Psoas muscle (tissue), 8 donors: ENCODE measurements at regions of chr1 and their contacts with region 1.

Region 1: DNA sequence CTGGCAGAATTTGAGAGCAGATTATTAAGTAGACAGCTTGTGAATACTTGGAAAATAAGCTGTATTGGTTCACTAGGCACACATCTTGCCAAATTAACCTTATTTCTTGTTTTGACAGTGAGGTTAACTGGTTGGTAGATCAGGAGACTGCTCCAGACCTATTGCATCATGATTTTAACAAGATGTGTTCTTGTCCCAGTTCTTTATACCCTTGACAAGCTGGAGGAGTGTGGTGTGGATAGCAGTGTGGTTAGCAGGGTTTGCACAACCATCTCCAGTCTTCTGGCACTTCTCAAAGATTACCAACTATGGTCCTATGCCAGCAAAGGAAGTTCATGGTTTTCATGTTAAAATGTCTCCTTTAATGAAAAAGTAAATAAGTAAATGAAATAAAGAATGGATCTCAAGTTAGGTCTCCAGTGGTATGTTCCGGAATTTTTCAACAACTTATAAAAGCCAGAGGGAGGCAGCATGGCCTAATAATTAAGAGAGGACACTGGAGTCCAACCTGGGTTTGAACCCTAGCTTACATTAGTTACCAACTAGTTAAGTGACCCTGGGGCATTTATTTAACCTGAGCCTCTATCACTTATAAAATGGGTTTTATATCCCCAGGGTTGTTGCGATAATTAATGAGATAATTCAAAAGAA is 34.1 kb downstream of the DDX20 start:
- DNase-seq: no peak
- ATAC-seq: peak in 2 of 4 donors; percentile 55 to 77
- H3K4me3 ChIP-seq: no peak overlapping the region
- H3K27ac ChIP-seq: no peak overlapping the region
- H3K4me1 ChIP-seq: no peaks in the 10 kb centered on the region
- H3K27me3 ChIP-seq: no peaks in the 10 kb centered on the region
- CTCF ChIP-seq: peak; percentile 25

Region 2: DNA sequence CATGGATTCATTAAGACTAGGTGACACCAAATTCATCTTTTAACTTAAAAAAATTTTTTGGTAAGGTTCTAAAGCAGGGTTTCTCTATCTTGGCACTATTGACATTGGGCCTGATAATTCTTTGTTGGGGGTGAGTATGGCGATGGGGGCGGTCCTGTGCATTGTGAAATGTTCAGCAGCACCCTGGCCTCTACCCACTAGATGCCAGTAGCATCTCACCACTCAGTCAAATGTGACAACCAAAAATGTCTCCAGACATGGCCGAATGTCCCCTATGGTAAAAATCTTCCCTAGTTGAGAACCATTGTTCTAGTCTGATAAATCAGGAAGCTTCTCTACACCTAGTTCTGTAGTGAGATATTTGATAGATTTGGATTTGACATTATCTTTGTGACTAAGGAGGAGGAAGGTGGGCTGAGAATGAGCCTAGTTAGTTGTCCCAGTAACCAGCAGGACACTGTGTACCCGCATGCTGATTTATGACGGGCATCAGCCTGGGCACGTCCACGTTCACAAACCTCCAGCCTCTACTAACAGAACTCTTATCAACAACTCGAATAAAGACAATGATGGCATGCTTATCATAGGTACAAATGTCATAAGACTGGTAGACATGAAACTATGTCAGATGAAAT is 95.1 kb after region 1 on chr1:
- intact Hi-C with region 1: no loop called
- DNase-seq: no peak
- ATAC-seq: peak in 2 of 4 donors; percentile 54 to 70
- H3K4me3 ChIP-seq: no peak overlapping the region
- H3K27ac ChIP-seq: no peak overlapping the region
- H3K4me1 ChIP-seq: peaks cover 20% of the 10 kb centered on the region
- H3K27me3 ChIP-seq: peaks cover 0 to 5% (median 0%) of the 10 kb centered on the region in 3 donors
- CTCF ChIP-seq: no peak

Region 3: GRCh38 chr1:112337028-112337531 is 547.3 kb after region 1 on chr1:
- intact Hi-C with region 1: loop called in 1 of 2 experiments (anchors 10 kb)
- DNase-seq: peak; percentile 51 to 59
- ATAC-seq: peak; percentile 42 to 72 (median 68)
- H3K4me3 ChIP-seq: no peak overlapping the region
- H3K27ac ChIP-seq: no peak overlapping the region
- H3K4me1 ChIP-seq: no peaks in the 10 kb centered on the region
- H3K27me3 ChIP-seq: peaks cover 0 to 8% (median 0%) of the 10 kb centered on the region in 3 donors
- CTCF ChIP-seq: peak; percentile 49

Region 4: DNA sequence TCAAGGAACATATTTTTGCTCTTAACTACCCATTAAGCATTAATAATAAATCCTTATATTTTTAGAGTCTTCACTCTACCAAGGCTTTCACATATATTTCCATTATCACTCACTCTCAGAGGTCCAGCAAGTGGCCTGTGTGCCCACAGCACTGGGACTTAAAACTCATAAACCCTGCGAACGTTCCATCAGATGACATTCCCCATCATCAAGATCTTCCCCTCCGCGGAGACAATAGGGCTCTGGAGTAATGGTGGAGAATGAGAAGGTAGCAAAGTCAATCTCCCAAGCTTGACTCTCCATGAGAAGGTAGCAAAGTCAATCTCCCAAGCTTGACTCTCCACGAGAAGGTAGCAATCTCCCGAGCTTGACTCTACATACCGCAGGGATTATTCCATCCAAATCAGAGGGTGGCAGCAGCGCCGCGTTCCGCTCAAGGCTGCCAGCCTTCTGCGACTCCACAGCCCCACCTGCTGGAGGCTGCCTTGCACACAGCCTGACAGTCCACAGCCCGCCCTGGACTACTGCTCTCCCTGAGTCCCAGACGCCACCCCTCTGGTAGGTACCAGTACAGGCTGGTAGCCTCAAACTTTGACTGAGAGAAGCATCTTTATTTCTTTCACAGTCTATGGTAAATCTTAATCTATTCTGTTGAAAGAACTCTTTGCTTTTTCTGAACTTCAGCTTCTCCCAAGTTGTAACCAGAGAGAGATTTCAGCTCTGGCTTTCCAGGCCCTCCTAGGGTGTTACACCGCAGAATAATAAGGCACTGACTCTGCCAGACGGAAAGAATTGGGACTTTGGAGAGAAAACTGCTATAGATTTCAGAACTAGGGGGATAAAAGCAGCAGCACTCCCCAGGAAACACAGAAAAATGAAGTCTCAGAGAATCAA is 579.8 kb after region 1 on chr1:
- intact Hi-C with region 1: loop called in 1 of 2 experiments (anchors 10 kb)
- DNase-seq: peak; percentile 86 to 92
- ATAC-seq: peak; percentile 95 to 100 (median 100)
- H3K4me3 ChIP-seq: no peak overlapping the region
- H3K27ac ChIP-seq: no peak overlapping the region
- H3K4me1 ChIP-seq: no peaks in the 10 kb centered on the region
- H3K27me3 ChIP-seq: peaks cover 0 to 4% (median 0%) of the 10 kb centered on the region in 3 donors
- CTCF ChIP-seq: peak; percentile 92